MCF 10A (cell line): ENCODE measurements at regions of chr4 and their contacts with region 1.

Region 1: DNA sequence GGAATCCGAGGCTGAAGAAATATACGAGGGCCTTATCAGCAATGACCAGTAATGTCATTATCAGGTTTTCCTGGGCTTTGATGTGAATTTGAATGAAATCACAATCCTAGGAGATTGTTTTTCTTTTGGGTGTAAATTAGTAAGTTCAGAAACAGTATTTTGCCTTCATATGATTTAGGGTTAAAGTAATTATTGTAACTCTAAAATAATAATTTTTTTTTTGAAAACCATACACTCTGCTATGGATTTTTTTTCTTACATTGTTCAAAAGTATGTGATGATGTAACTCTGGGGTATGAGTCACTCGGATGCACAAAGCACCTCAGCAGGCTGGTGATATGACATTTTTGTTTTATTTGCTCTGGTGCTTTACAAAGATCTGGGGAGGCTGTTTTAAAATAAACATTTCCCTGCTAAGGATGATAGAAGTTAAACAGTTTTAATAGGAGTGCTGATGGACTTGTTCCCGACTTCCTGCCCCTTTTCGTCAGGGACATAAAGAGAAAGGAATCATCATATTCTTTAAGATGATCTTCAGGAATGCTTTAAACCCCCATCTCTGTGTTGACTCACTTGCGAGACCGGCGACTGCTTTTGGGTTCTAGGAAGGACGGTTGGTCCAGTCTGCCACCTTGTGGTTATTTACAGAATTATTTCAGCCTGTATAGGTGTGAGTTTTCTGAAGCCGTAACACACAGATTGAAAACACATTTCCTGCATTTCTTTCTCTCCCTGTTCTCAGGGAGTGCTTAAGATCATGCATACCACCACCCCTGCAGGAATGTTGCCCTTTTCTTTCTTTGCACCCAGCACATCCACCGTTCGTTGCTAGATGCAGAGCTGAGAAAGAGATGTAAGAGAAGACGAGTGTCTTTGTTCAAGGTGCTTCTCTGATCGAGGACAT is 72.5 kb downstream of the RAPGEF2 start:
- DNase-seq: peak; percentile 82
- H3K4me3 Mint-ChIP-seq: no peak overlapping the region
- H3K27ac Mint-ChIP-seq: no peak overlapping the region
- H3K4me1 Mint-ChIP-seq: peaks cover 29% of the 10 kb centered on the region
- H3K27me3 Mint-ChIP-seq: no peaks in the 10 kb centered on the region
- CTCF ChIP-seq: peak; percentile 73

Region 2: DNA sequence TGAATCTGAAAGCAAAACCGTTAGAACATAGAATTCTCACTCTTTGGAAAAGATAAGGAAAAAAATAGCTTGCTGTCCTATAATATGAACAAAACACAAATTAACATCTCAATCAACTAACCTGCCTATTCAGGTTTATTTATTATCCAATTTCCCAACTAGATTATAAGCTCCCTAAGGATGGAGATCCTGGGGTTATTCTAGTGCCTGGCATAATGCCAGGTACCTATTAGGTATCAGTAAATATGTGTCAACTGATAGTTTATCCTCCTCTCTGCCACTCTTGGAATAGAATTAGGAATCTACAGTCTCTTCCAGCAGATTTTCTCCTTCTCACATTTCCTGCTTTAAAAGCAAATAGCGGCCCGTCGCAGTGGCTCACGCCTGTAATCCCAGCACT is 483.6 kb before region 1 on chr4:
- CTCF ChIA-PET with region 1: no interaction called
- POLR2A ChIA-PET with region 1: no interaction called
- intact Hi-C with region 1: no loop called
- DNase-seq: no peak
- H3K4me3 Mint-ChIP-seq: no peak overlapping the region
- H3K27ac Mint-ChIP-seq: no peak overlapping the region
- H3K4me1 Mint-ChIP-seq: no peaks in the 10 kb centered on the region
- H3K27me3 Mint-ChIP-seq: no peaks in the 10 kb centered on the region
- CTCF ChIP-seq: no peak

Region 3: DNA sequence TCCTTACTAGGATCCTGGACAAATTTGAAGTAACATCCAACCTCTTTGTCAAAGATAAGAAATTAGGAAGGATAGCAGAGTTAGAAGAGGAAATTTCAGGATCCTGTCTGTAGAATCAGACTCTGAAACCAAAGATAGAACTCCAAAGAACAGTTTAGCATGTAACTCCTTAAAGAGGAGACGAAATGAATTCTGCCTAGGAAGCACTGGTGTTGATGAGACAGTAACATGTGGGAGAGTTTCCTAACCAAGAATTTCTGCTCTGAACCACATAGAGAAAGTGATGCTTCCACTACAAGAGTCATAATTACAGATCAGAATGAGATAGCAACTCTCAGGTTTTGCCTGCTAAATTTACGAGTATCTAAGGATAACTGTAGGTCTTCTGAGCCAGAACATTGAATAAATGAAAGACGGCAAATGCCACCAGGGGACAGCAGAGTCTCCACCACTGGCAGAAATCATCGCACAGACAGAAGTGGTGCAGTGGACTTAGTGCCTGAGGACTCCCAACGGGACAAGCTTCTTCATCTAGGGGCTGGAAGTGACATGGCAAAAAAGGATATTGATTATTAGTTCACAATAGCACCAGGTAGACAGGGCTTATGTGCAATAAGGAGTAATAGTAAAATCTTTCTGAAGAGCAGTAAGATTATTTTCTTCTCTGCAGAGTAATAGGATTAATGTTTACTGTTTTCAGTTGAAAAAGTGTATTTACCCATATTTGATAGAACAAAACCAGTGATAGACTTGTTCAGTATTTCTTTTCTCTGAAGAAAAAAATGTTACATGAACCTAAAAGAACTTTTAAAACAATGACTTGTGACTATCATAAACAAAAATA is 445.4 kb before region 1 on chr4:
- CTCF ChIA-PET with region 1: no interaction called
- POLR2A ChIA-PET with region 1: no interaction called
- intact Hi-C with region 1: loop called (anchors 1 kb)
- DNase-seq: peak; percentile 69
- H3K4me3 Mint-ChIP-seq: no peak overlapping the region
- H3K27ac Mint-ChIP-seq: no peak overlapping the region
- H3K4me1 Mint-ChIP-seq: no peaks in the 10 kb centered on the region
- H3K27me3 Mint-ChIP-seq: peaks cover 55% of the 10 kb centered on the region
- CTCF ChIP-seq: peak; percentile 75

Region 4: DNA sequence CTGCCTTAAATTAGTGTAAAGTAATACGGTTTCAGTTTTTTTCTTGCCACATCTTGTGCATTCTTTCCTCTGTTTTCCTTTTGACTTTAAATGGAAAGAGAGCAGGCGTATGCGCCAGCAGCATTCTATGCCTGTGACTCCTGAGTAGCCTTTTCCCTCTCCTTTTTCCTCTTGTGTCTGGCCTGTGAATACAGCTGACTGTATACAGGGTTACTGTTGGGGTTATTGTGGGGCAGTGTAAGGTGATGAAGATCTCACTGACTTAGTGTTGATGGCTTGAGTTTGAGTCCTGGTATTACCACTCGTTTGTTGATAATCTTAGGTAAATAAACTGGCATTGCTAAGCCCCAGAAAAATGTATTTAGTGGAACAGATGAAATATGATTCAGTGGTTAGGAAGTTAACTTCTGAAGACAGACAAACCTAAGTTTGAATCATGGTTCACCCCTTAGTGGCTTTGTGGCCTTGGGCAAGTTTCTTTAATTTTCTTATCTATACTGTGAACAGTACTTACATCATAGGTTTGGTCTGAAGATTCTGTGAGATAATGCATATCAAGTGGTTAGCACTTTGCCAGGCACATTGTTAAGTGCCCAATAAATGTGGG is 301.4 kb before region 1 on chr4:
- CTCF ChIA-PET with region 1: no interaction called
- POLR2A ChIA-PET with region 1: no interaction called
- intact Hi-C with region 1: loop called (anchors 5 kb)
- DNase-seq: peak; percentile 50
- H3K4me3 Mint-ChIP-seq: no peak overlapping the region
- H3K27ac Mint-ChIP-seq: peak overlapping the region; percentile 61
- H3K4me1 Mint-ChIP-seq: peaks cover 10% of the 10 kb centered on the region
- H3K27me3 Mint-ChIP-seq: no peaks in the 10 kb centered on the region
- CTCF ChIP-seq: no peak

Region 5: GRCh38 chr4:159010563-159011260 is 164.6 kb before region 1 on chr4:
- CTCF ChIA-PET with region 1: interaction called, 7 read pairs
- POLR2A ChIA-PET with region 1: no interaction called
- intact Hi-C with region 1: loop called (anchors 5 kb)
- DNase-seq: peak; percentile 91
- H3K4me3 Mint-ChIP-seq: no peak overlapping the region
- H3K27ac Mint-ChIP-seq: no peak overlapping the region
- H3K4me1 Mint-ChIP-seq: peaks cover 23% of the 10 kb centered on the region
- H3K27me3 Mint-ChIP-seq: no peaks in the 10 kb centered on the region
- CTCF ChIP-seq: no peak

Region 6: DNA sequence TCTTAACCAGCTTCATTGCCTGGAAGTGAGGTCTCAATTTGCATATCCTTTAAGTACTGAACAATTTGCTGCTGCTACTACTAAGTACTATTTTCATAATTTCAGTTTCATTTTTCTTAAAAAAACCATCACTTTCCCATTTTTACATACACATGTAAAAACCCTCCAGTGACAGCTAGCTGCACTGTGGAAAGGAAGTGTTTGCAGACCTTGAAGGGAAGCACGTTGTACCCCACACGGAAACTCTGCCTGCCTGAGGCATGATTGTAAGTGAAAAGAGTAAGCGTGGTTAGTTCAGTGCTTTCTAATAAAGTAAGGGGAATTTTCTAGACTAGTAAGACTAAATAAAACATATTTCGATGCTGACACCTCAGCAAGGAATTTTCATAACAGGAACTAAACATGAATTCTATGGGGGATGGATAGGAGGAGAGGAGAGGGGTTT is 31.1 kb after region 1 on chr4:
- CTCF ChIA-PET with region 1: interaction called, 4 read pairs
- POLR2A ChIA-PET with region 1: no interaction called
- intact Hi-C with region 1: loop called (anchors 2 kb)
- DNase-seq: no peak
- H3K4me3 Mint-ChIP-seq: no peak overlapping the region
- H3K27ac Mint-ChIP-seq: no peak overlapping the region
- H3K4me1 Mint-ChIP-seq: peaks cover 18% of the 10 kb centered on the region
- H3K27me3 Mint-ChIP-seq: no peaks in the 10 kb centered on the region
- CTCF ChIP-seq: no peak